ENCODE measurements at regions of chr15 and their contacts with region 1.

Region 1: DNA sequence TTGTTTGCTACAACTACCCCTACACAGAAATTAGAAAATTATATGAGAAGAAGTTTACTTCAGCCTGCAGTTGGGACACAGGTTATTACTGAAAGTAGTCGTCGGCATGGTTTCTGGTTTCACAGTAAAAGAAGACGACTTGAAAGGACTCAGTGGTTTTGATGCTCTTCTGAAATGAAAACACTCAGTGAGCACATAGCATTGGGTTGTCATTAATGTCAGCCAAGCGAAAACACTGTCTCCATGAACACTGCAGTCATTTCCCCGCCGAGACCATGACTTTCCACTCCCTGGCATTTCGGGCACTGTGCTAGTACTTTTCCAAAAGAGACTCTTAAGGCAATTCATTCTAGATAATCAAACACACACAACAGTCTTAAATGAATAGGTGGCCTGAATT is 69.2 kb upstream of the ICE2 start:
- DNase-seq: peak in 5 of 14 experiments; percentile 34 to 69 (median 65)
- ATAC-seq: peak; percentile 57
- H3K4me3 ChIP-seq: peak overlapping the region; percentile 27
- H3K4me3 Mint-ChIP-seq: peak overlapping the region; percentile 71
- H3K27ac ChIP-seq: peak overlapping the region; percentile 2 to 65
- H3K27ac Mint-ChIP-seq: peak overlapping the region; percentile 85
- H3K4me1 ChIP-seq: peaks cover 74% of the 10 kb centered on the region
- H3K4me1 Mint-ChIP-seq: peaks cover 94% of the 10 kb centered on the region
- H3K27me3 ChIP-seq: no peaks in the 10 kb centered on the region
- H3K27me3 Mint-ChIP-seq: no peaks in the 10 kb centered on the region
- CTCF ChIP-seq: no peak

Region 2: GRCh38 chr15:60536314-60536713 is 11.8 kb before region 1 on chr15:
- CTCF ChIA-PET with region 1: interaction called, 10 read pairs
- POLR2A ChIA-PET with region 1: interaction called, 22 read pairs
- intact Hi-C with region 1: no loop called
- DNase-seq: no peak
- ATAC-seq: no peak
- H3K4me3 ChIP-seq: no peak overlapping the region
- H3K4me3 Mint-ChIP-seq: no peak overlapping the region
- H3K27ac ChIP-seq: no peak overlapping the region
- H3K27ac Mint-ChIP-seq: no peak overlapping the region
- H3K4me1 ChIP-seq: peaks cover 39% of the 10 kb centered on the region
- H3K4me1 Mint-ChIP-seq: peaks cover 96% of the 10 kb centered on the region
- H3K27me3 ChIP-seq: no peaks in the 10 kb centered on the region
- H3K27me3 Mint-ChIP-seq: no peaks in the 10 kb centered on the region
- CTCF ChIP-seq: no peak